Vagina (tissue), 2 donors: ENCODE measurements at regions of chr12 and their contacts with region 1.

Region 1: GRCh38 chr12:108093209-108093608 is 35.9 kb upstream of the WSCD2 start:
- DNase-seq: no peak
- H3K4me3 ChIP-seq: no peak overlapping the region
- H3K27ac ChIP-seq: peak overlapping the region; percentile 21
- H3K4me1 ChIP-seq: peaks cover 6% of the 10 kb centered on the region
- H3K27me3 ChIP-seq: no peaks in the 10 kb centered on the region
- CTCF ChIP-seq: no peak
- POLR2A ChIP-seq: no peak

Region 2: GRCh38 chr12:108017472-108018057 is 75.6 kb before region 1 on chr12:
- intact Hi-C with region 1: loop called (anchors 2 kb)
- DNase-seq: peak in 1 of 2 donors; percentile 6
- H3K4me3 ChIP-seq: no peak overlapping the region
- H3K27ac ChIP-seq: no peak overlapping the region
- H3K4me1 ChIP-seq: no peaks in the 10 kb centered on the region
- H3K27me3 ChIP-seq: no peaks in the 10 kb centered on the region
- CTCF ChIP-seq: no peak
- POLR2A ChIP-seq: no peak